Left ventricle myocardium inferior (tissue), 1 donor: ENCODE measurements at regions of chr3 and their contacts with region 1.

Region 1: DNA sequence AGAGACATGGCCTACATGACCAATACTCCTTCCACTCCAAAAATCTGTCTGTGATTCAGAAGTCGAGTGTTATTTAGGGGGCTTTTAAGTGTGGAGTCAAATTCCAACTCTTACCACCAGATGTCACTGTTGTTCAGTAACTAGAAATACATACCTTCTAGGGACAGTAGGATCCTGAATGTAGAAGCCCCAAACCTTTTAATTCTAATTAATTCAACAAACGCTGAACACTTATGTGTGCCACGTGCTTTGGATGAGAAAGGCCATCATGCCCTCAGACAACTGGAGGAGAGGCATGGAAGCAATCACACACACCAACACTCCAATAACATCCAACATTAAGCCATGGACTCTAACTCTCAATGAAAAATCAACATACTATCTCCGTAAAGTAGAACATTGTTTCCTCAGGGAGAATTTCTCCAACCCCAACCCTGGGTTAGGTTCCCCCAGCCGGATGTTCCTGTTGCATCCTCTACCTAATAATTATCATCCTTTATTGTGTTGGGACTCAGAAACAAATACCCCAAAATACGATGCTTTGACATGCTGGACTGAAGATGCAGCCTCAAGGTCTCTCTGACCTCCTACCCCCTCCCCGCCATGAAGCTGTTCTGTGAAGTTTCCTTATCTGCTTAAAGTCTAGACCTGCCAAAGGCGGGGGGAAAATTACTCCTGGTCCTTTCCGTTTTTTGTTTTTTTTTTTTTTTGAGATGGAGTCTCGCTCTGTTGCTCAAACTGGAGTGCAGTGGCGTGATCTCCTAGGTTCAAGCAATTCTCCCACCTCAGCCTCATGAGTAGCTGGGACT is 8.0 kb upstream of the CCDC13 start:
- DNase-seq: no peak
- H3K4me3 ChIP-seq: no peak overlapping the region
- H3K27ac ChIP-seq: no peak overlapping the region
- H3K4me1 ChIP-seq: peaks cover 30% of the 10 kb centered on the region
- H3K27me3 ChIP-seq: no peaks in the 10 kb centered on the region
- CTCF ChIP-seq: peak; percentile 84

Region 2: GRCh38 chr3:42732829-42733459 is 48.2 kb before region 1 on chr3:
- intact Hi-C with region 1: no loop called
- DNase-seq: no peak
- H3K4me3 ChIP-seq: no peak overlapping the region
- H3K27ac ChIP-seq: peak overlapping the region; percentile 92
- H3K4me1 ChIP-seq: peaks cover 52% of the 10 kb centered on the region
- H3K27me3 ChIP-seq: no peaks in the 10 kb centered on the region
- CTCF ChIP-seq: no peak

Region 3: GRCh38 chr3:42839616-42840015 is 58.5 kb after region 1 on chr3:
- intact Hi-C with region 1: loop called (anchors 10 kb)
- DNase-seq: no peak
- H3K4me3 ChIP-seq: peak overlapping the region; percentile 18
- H3K27ac ChIP-seq: no peak overlapping the region
- H3K4me1 ChIP-seq: peaks cover 19% of the 10 kb centered on the region
- H3K27me3 ChIP-seq: no peaks in the 10 kb centered on the region
- CTCF ChIP-seq: peak; percentile 85

Region 4: DNA sequence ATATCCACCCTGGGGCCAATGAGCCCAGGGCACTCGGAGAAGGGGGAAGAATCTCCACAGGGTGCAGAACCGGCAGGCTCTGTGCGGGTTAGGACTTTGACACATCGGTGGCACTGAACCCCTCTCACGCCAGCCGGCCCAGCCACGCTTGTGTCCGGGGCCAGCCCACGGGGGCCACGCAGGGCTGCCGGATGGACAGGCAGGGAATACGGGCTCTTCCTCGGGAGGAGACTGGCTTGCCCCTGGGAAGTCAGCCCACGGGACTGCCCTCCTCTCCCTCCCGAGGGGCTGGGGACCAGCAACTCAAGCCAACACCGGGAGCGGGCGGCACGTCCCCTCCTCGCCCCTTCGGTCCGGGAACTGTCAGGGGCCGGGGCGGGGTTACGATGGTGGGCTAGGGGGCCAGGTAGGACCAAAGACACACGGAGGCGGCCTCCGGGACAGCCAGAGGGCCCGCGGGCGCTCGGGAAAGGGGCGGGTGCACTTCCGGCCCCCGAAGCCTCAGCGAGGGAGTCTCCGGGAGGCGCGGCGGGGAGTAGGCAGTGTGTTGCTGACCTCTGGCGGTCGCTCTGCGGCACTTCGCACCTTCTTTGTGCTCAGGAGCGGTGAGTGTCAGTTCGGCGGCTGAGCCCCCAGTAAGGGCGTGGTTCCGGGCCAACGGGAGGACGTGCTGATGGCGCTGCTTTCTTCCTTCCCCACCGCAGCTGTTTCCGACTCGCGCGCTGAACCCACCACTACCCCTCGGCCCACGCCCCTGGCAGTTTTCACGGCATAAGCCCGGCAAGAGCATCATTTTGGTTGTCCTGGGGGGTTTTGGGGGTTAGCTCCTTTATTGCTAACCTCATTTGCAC is 99.7 kb after region 1 on chr3:
- intact Hi-C with region 1: loop called (anchors 5 kb)
- DNase-seq: peak; percentile 82
- H3K4me3 ChIP-seq: peak overlapping the region; percentile 74
- H3K27ac ChIP-seq: peak overlapping the region; percentile 43
- H3K4me1 ChIP-seq: peaks cover 12% of the 10 kb centered on the region
- H3K27me3 ChIP-seq: peaks cover 17% of the 10 kb centered on the region
- CTCF ChIP-seq: peak; percentile 98

Region 5: DNA sequence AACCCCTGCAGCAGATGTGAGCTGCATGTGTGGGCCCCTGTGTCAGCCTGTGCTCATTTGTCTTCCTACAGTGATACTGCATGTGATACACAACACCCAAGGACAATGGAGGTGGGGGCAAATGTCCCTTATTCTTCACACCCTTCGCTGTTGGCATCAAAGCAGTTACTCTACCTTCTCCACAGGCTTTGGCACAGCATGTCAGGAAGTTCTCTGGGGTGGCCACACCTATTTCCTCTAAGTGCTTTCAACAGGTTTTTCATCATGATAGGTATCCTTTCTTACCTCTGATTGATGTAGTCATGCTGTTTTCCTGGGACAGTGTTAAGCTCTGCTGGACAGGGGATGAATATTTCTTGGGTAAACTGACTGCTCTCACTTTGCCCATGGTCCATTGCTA is 154.4 kb after region 1 on chr3:
- intact Hi-C with region 1: no loop called
- DNase-seq: no peak
- H3K4me3 ChIP-seq: peak overlapping the region; percentile 61
- H3K27ac ChIP-seq: no peak overlapping the region
- H3K4me1 ChIP-seq: peaks cover 5% of the 10 kb centered on the region
- H3K27me3 ChIP-seq: peaks cover 18% of the 10 kb centered on the region
- CTCF ChIP-seq: no peak